GM12878 (cell line): ENCODE measurements at regions of chr12 and their contacts with region 1.

Region 1: GRCh38 chr12:69157023-69157655 is 82.2 kb upstream of the CPSF6 start:
- DNase-seq: peak; percentile 64
- ATAC-seq: peak; percentile 94
- H3K4me3 ChIP-seq: no peak overlapping the region
- H3K27ac ChIP-seq: no peak overlapping the region
- H3K4me1 ChIP-seq: peaks cover 18% of the 10 kb centered on the region
- H3K27me3 ChIP-seq: no peaks in the 10 kb centered on the region
- CTCF ChIP-seq: peak; percentile 95 to 100 (median 99); a peak in 5 of 6 replicates
- EP300 ChIP-seq: no peak
- POLR2A ChIP-seq: peak; percentile 35; the same call in 1 of the 2 replicates
- RAD21 ChIP-seq: peak; percentile 66

Region 2: DNA sequence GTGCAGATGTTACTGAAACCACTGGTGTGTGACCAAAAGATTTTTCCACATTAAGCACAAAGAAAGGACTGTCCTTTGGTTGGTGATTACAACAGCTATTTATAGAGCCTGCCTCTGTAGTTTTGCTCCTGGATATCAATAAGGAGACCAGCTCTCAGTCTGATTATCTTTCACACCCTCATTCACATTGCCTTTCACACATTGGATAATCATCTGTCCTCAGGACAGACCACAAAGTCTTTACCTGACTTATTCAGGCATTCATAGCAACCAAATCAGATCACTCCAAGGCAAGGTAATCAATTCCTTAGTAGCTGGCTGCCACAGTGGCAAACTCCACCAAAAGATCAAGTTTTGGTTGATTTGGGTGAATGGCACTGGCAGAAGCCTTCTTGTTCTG is 22.6 kb after region 1 on chr12:
- CTCF ChIA-PET with region 1: interaction called, 17 read pairs
- POLR2A ChIA-PET with region 1: interaction called, 3 read pairs
- RAD21 ChIA-PET with region 1: interaction called, 5 read pairs
- SMC1A ChIA-PET with region 1: interaction called, 4 read pairs
- in situ Hi-C with region 1: no loop called
- intact Hi-C with region 1: no loop called
- DNase-seq: no peak
- ATAC-seq: no peak
- H3K4me3 ChIP-seq: no peak overlapping the region
- H3K27ac ChIP-seq: no peak overlapping the region
- H3K4me1 ChIP-seq: no peaks in the 10 kb centered on the region
- H3K27me3 ChIP-seq: no peaks in the 10 kb centered on the region
- CTCF ChIP-seq: no peak
- EP300 ChIP-seq: no peak
- POLR2A ChIP-seq: no peak
- RAD21 ChIP-seq: no peak

Region 3: GRCh38 chr12:69239352-69239921 is 82.3 kb after region 1 on chr12 and contains the start of gene CPSF6:
- CTCF ChIA-PET with region 1: interaction called, 285 read pairs
- POLR2A ChIA-PET with region 1: interaction called, 7 read pairs
- RAD21 ChIA-PET with region 1: interaction called, 9 read pairs
- SMC1A ChIA-PET with region 1: interaction called, 6 read pairs
- in situ Hi-C with region 1: no loop called
- intact Hi-C with region 1: no loop called
- DNase-seq: peak; percentile 62
- ATAC-seq: peak; percentile 89
- H3K4me3 ChIP-seq: peak within 1 kb of the TSS; percentile 98
- H3K27ac ChIP-seq: peak within 1 kb of the TSS; percentile 81
- H3K4me1 ChIP-seq: peaks cover 14% of the 10 kb centered on the region
- H3K27me3 ChIP-seq: no peaks in the 10 kb centered on the region
- CTCF ChIP-seq: no peak
- EP300 ChIP-seq: no peak
- POLR2A ChIP-seq: peak; percentile 91
- RAD21 ChIP-seq: no peak
- polyA plus RNA-seq, gene CPSF6: 45.9 to 49.2 TPM

Region 4: GRCh38 chr12:69254046-69254445 is 96.9 kb after region 1 on chr12:
- CTCF ChIA-PET with region 1: interaction called, 285 read pairs
- POLR2A ChIA-PET with region 1: interaction called, 6 read pairs
- RAD21 ChIA-PET with region 1: interaction called, 88 read pairs
- SMC1A ChIA-PET with region 1: interaction called, 103 read pairs
- in situ Hi-C with region 1: loop called (anchors 5 kb)
- intact Hi-C with region 1: loop called (anchors 1 kb)
- DNase-seq: peak; percentile 51
- ATAC-seq: peak; percentile 83
- H3K4me3 ChIP-seq: no peak overlapping the region
- H3K27ac ChIP-seq: no peak overlapping the region
- H3K4me1 ChIP-seq: no peaks in the 10 kb centered on the region
- H3K27me3 ChIP-seq: no peaks in the 10 kb centered on the region
- CTCF ChIP-seq: peak; percentile 51 to 77 (median 64); a peak in 5 of 6 replicates
- EP300 ChIP-seq: no peak
- POLR2A ChIP-seq: no peak
- RAD21 ChIP-seq: peak; percentile 76

Region 5: GRCh38 chr12:69330475-69331473 is 173.6 kb after region 1 on chr12:
- CTCF ChIA-PET with region 1: interaction called, 6 read pairs
- POLR2A ChIA-PET with region 1: no interaction called
- RAD21 ChIA-PET with region 1: interaction called, 4 read pairs
- SMC1A ChIA-PET with region 1: no interaction called
- in situ Hi-C with region 1: no loop called
- intact Hi-C with region 1: loop called (anchors 10 kb)
- DNase-seq: no peak
- ATAC-seq: peak; percentile 86
- H3K4me3 ChIP-seq: peak overlapping the region; percentile 48
- H3K27ac ChIP-seq: no peak overlapping the region
- H3K4me1 ChIP-seq: no peaks in the 10 kb centered on the region
- H3K27me3 ChIP-seq: no peaks in the 10 kb centered on the region
- CTCF ChIP-seq: no peak
- EP300 ChIP-seq: no peak
- POLR2A ChIP-seq: peak; percentile 59
- RAD21 ChIP-seq: no peak

Region 6: DNA sequence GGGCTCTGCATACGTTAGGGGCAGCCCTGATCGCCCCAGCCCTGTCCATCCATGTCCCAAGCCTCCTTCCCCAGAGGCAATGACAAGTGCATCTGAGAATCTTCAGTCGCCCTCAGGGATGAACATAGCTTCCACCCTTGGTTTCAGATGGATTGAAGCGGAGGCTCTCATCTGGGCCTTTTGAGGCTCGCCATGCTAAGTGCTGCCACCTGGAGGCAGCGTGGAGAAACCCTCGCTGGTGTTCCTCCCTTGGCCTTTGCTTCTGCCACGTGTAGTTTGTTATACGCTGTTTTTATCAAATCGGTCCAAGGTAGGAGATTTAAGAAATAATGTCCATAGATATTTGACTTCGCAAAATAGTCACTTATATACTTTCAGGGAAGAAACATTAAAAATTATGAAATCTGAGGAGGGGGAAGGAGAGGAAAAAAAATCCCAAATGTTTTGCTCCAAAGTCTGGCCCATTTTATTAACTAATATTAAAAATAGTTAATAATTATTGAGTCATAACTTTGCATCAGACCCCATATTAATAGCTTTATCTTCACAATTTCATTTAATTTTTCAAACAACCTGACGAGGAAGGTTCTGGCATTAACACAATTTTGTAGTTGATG is 482.4 kb after region 1 on chr12:
- CTCF ChIA-PET with region 1: interaction called, 19 read pairs
- POLR2A ChIA-PET with region 1: no interaction called
- RAD21 ChIA-PET with region 1: no interaction called
- SMC1A ChIA-PET with region 1: interaction called, 3 read pairs
- in situ Hi-C with region 1: no loop called
- intact Hi-C with region 1: loop called (anchors 2 kb)
- DNase-seq: peak; percentile 15
- ATAC-seq: peak; percentile 96
- H3K4me3 ChIP-seq: no peak overlapping the region
- H3K27ac ChIP-seq: no peak overlapping the region
- H3K4me1 ChIP-seq: no peaks in the 10 kb centered on the region
- H3K27me3 ChIP-seq: no peaks in the 10 kb centered on the region
- CTCF ChIP-seq: peak; percentile 82 to 90 (median 87)
- EP300 ChIP-seq: no peak
- POLR2A ChIP-seq: no peak
- RAD21 ChIP-seq: peak; percentile 63